ENCODE measurements at regions of chr1 and their contacts with region 1.

Region 1: GRCh38 chr1:25743826-25744581 is 56.0 kb upstream of the SELENON start:
- DNase-seq: peak; percentile 91 to 94
- H3K4me3 ChIP-seq: no peak overlapping the region
- H3K27ac ChIP-seq: peak overlapping the region; percentile 98 to 99 (median 99)
- H3K4me1 ChIP-seq: peaks cover 69 to 76% of the 10 kb centered on the region in 2 donors
- H3K27me3 ChIP-seq: no peaks in the 10 kb centered on the region
- CTCF ChIP-seq: peak in 5 of 6 experiments; percentile 12 to 77 (median 69)
- POLR2A ChIP-seq: peak in 1 of 2 donors; percentile 54

Region 2: GRCh38 chr1:24688621-24689195 is 1055.3 kb before region 1 on chr1:
- intact Hi-C with region 1: no loop called
- DNase-seq: peak; percentile 68 to 71
- H3K4me3 ChIP-seq: no peak overlapping the region
- H3K27ac ChIP-seq: no peak overlapping the region
- H3K4me1 ChIP-seq: peaks cover 0 to 4% of the 10 kb centered on the region in 2 donors
- H3K27me3 ChIP-seq: no peaks in the 10 kb centered on the region
- CTCF ChIP-seq: peak in 5 of 6 experiments; percentile 38 to 87 (median 79)
- POLR2A ChIP-seq: no peak

Region 3: GRCh38 chr1:25616095-25616986 is 127.7 kb before region 1 on chr1 and contains the start of gene MAN1C1:
- intact Hi-C with region 1: loop called (anchors 5 kb)
- DNase-seq: peak; percentile 91 to 93
- H3K4me3 ChIP-seq: peak within 1 kb of the TSS; percentile 49 to 89 (median 88)
- H3K27ac ChIP-seq: peak within 1 kb of the TSS; percentile 74 to 92 (median 88)
- H3K4me1 ChIP-seq: peaks cover 34 to 38% of the 10 kb centered on the region in 2 donors
- H3K27me3 ChIP-seq: no peaks in the 10 kb centered on the region
- CTCF ChIP-seq: peak; percentile 24 to 62 (median 51)
- POLR2A ChIP-seq: peak in 1 of 2 donors; percentile 88
- total RNA-seq, gene MAN1C1: 28.1 to 60.4 (median 32.7) TPM

Region 4: DNA sequence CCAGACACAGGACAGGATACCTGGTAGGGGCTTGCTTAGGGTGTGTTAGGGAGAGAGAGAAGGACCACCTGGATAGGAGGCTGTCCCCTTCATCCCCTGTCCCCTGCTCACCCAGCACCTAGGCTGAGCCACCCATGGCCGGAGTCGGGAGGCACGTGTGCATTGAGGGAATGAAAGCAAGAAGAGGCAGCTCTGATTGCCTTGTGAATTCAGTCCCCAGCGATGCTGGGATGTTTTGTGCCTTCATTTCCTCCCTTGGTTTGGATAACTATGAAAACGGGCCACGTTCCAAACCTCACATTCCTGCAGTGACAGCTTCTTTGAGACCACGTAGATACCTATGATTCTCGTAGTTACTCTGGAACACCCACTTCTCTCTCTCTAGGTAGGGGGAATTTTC is 60.3 kb before region 1 on chr1:
- intact Hi-C with region 1: loop called (anchors 5 kb)
- DNase-seq: peak; percentile 77 to 79
- H3K4me3 ChIP-seq: no peak overlapping the region
- H3K27ac ChIP-seq: peak overlapping the region; percentile 87 to 90 (median 90)
- H3K4me1 ChIP-seq: peaks cover 27 to 44% of the 10 kb centered on the region in 2 donors
- H3K27me3 ChIP-seq: no peaks in the 10 kb centered on the region
- CTCF ChIP-seq: no peak
- POLR2A ChIP-seq: no peak

Region 5: DNA sequence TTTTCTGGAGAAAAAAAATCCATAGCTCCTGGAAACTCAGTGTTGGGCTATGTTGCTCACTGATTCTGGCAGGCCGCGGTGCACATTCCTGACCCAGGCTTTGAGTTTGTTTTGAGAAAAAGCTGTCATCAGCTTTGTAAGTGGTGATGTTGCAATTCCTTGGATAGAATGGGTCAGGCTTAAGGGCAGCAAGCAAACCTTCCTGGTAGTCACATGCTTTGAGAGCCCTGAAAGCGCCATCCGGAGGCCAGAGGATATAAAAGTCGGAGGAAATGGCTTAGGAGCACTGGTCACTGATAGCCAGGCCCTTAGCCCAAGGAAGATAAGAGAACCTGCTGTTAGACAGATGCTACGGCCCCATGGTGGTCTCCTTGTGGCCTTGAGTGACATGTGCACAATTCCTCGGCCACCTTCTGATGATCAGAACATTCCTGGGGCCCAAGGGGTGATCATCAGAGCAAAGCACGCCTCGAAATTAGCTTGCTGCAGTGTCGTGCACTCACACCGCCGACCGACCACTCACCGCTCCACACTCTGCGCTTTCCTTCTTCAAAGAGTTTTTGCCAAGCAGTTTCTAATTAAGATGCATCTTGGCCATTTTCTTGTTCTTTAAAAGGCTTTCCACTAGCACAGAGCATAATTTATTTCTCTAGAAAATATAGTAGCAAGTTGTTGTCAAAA is 48.8 kb before region 1 on chr1:
- intact Hi-C with region 1: loop called (anchors 5 kb)
- DNase-seq: peak; percentile 89 to 91
- H3K4me3 ChIP-seq: no peak overlapping the region
- H3K27ac ChIP-seq: peak overlapping the region; percentile 93 to 96 (median 94)
- H3K4me1 ChIP-seq: peaks cover 37 to 60% of the 10 kb centered on the region in 2 donors
- H3K27me3 ChIP-seq: no peaks in the 10 kb centered on the region
- CTCF ChIP-seq: peak in 4 of 6 experiments; percentile 18 to 49 (median 35)
- POLR2A ChIP-seq: peak in 1 of 2 donors; percentile 63

Region 6: DNA sequence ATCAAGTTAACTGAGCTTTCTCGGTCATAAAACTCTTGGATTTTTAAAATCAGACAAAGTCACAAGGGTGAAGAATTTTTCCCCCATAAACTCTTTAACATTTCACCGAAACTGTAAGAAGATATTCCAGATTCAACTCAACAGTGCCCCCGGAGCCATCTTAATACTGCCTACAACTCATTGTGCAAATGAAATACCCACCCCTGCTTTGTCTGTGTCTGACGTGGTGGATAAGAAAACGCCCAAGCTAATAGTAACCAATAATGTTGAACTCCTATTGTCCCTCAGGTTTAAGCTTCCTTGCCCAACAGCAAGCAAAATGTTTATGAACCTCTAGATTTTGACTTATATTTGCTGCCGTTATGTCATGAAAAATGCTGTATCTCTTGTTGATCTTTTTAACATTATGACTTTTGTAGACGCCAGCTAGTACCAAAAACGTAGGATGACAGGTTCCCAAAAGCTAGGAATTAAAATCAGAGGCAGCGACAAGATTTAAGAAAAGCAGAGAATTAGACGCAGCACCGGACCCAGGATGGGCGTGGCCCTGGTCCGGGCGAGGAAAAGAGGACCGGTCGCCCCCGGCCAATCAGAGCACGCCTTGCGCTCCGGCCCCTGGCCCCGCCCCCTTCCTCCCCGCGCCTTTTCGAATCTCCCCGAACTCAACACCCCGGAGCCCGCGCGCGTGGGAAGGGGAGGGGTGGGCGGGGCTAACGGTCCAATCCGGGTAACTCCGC is 161.1 kb after region 1 on chr1:
- intact Hi-C with region 1: no loop called
- DNase-seq: peak; percentile 94 to 95
- H3K4me3 ChIP-seq: peak overlapping the region; percentile 41 to 70 (median 53)
- H3K27ac ChIP-seq: peak overlapping the region in 1 of 3 donors; percentile 35
- H3K4me1 ChIP-seq: peaks cover 7 to 15% of the 10 kb centered on the region in 2 donors
- H3K27me3 ChIP-seq: no peaks in the 10 kb centered on the region
- CTCF ChIP-seq: no peak
- POLR2A ChIP-seq: no peak

Measured in thyroid gland (tissue), 4 donors.